ENCODE measurements at regions of chr4 and their contacts with region 1.

Region 1: DNA sequence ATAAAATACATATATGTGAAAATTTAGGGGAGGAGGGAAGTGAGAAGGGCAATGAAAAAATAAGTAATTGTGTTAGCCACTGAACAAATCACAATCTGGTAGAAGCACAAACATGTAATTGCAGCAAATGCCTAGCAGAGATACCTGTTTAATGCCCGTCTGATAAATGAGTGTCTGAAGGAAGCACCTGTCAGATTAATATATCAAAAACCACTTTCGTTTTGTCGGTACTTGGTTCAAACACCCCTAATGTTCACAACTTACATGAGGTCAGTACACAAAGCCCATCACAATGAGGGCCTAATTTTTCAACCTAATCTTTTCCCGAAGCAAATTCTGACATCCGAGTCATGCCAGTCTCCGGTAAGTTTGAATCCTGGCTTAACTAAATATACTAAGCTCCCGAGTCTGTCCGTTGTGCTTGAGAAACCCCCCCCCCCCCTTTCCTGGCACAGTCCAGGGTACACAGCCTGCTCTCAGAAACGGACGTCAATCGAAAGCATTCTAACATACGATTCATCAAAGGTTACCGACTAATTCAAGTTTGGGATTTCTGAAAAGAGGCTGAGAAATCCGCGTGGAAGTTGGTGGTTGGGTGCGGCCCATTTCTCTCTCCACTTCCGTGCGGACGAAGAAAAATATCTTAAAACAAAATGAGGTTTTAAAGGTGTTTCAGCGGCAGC is 758 bp downstream of the SDAD1 start:
- DNase-seq: peak; percentile 19
- H3K4me3 ChIP-seq: peak overlapping the region; percentile 97
- H3K27ac ChIP-seq: peak overlapping the region; percentile 38
- H3K4me1 ChIP-seq: peaks cover 12% of the 10 kb centered on the region
- CTCF ChIP-seq: no peak

Region 2: DNA sequence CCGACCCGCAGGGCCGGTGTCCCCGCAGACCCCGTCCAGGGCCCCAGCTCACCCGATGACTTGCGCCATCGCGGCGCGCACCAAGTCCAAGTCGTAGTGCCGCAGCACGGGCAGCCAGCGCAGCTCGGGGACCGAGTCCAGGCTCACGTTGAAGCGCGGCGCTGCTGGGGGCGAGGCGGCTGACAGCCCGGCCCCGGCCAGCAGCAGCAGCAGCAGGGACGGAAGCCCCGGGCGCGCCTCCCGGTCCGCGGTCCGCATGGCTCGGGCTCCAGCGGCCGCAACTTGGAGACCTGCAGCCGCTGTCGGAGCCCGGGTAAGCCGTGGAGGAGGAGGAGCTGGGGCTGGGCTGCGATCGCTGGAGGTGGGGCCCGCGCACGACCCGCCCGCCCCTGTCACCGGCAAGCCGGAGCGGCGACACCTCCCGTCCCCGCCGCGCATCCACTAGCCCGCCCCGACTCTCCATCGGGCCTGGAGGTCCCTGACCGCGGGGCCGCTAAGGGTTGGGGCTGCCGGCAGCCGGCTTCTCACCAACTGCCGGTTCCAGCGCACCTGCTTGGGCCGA is 49.2 kb before region 1 on chr4 and contains the start of gene NAAA:
- CTCF ChIA-PET with region 1: no interaction called
- POLR2A ChIA-PET with region 1: interaction called, 4 read pairs
- intact Hi-C with region 1: loop called (anchors 2 kb)
- DNase-seq: peak; percentile 81
- H3K4me3 ChIP-seq: peak within 1 kb of the TSS; percentile 76
- H3K27ac ChIP-seq: peak within 1 kb of the TSS; percentile 41
- H3K4me1 ChIP-seq: peaks cover 16% of the 10 kb centered on the region
- CTCF ChIP-seq: peak; percentile 52
- total RNA-seq, gene NAAA: 21.5 and 29.9 TPM in 2 replicates

Region 3: GRCh38 chr4:76148142-76148865 is 158.3 kb after region 1 on chr4 and contains the start of gene NUP54:
- CTCF ChIA-PET with region 1: no interaction called
- POLR2A ChIA-PET with region 1: interaction called, 3 read pairs
- intact Hi-C with region 1: loop called (anchors 1 kb)
- DNase-seq: peak; percentile 96
- H3K4me3 ChIP-seq: peak within 1 kb of the TSS; percentile 96
- H3K27ac ChIP-seq: peak within 1 kb of the TSS; percentile 34
- H3K4me1 ChIP-seq: peaks cover 25% of the 10 kb centered on the region
- CTCF ChIP-seq: no peak
- total RNA-seq, gene NUP54: 29.2 and 40.2 TPM in 2 replicates

Region 4: DNA sequence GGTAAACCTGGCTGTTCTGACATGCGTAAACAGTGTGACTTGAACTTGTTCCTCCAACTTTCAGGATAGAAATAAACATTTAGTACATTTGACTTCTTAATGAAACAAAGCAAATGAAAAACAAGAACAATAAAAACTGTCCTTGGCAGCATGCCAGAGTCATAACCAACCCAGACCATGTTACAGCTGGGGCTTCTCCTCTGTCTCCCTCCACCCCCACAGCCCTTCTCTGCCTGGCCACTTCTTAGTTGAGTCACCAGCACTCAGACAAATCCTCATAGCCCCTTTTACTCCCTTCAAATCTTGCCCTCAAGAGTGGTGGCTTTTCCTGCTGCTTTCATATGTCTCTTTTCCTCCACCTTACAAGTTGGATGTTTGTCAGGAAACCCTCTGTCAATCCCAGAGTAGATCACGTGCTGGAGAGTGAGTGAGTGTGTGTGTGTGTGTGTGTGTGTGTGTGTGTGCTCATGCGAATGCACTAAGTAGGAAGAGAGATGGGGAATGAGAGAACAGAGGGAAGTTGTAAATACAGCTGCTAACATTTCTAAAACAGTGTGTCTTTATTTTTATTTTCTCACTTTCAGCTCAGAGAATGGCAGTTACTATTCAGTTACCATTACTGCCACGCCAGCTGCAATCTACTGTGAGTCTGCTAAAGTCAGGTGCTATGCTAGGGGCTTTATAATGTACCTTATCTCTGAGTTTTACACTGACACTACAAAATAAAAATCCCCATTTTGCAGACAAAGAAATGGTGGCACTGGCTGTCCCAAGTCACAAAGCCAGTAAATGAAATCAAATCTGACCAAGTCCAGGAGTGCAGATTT is 208.6 kb after region 1 on chr4:
- CTCF ChIA-PET with region 1: no interaction called
- POLR2A ChIA-PET with region 1: no interaction called
- intact Hi-C with region 1: loop called (anchors 2 kb)
- DNase-seq: peak; percentile 20
- H3K4me3 ChIP-seq: no peak overlapping the region
- H3K27ac ChIP-seq: no peak overlapping the region
- H3K4me1 ChIP-seq: peaks cover 26% of the 10 kb centered on the region
- CTCF ChIP-seq: no peak